A549 (cell line): ENCODE measurements at regions of chr14 and their contacts with region 1.

Region 1: DNA sequence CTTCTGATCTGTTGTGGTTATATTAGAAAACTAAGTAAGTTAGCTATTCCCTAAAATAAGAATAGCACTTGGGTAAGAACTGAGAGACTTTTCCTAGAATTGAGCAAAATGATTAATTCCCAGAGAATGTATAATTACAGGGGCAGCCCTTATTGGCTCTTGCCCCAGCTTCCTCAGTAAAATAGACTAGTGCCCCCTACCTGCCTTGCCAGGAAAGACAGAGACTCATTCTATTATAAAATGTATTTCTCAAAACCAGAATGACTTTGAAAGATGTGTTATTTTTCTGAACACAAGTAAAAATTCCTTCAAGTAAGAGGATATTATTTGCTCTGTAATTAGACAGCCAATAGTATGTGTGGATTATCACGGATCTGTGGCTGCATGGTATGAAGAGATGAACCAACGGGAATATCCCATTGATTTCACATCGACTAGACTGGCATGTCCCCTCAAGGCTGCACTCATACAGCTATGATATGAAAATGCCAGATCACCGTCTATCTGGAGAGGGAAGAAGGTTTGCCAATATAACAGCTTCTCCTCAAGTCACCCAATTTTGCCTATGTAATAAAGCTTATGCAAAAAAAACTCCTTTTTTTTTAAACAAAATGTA is 7.4 kb upstream of the GLRX5 start:
- DNase-seq: peak in 1 of 2 experiments; percentile 44
- ATAC-seq: peak; percentile 45 to 78; a peak in 3 of 6 replicates
- H3K4me3 ChIP-seq: no peak overlapping the region
- H3K27ac ChIP-seq: no peak overlapping the region
- H3K4me1 ChIP-seq: peaks cover 53% of the 10 kb centered on the region
- CTCF ChIP-seq: peak; percentile 77
- EP300 ChIP-seq: no peak
- POLR2A ChIP-seq: no peak
- RAD21 ChIP-seq: peak; percentile 55 to 60; a peak in 3 of 5 replicates

Region 2: DNA sequence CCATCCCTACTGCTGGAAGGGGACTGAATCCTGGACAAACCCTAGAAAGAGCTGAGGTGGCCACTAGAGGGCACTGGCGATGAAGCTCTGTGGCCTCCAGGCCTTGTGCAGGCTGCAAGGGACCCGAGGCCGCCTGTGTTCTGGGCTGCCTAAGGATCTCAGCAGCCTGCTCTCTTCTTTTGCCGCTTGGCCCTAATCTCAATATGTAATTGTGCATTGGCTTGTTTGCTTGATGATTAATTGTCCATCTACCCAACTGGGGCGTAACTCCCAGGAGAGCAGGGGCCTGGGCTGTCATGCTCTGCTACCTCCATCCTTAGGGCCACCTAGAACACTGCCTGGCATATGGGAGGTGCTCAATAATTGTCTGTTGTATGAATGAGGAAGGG is 84.9 kb before region 1 on chr14:
- CTCF ChIA-PET with region 1: interaction called, 133 read pairs
- POLR2A ChIA-PET with region 1: interaction called, 3 read pairs
- DNase-seq: peak; percentile 69 to 91
- ATAC-seq: peak; percentile 90 to 98
- H3K4me3 ChIP-seq: no peak overlapping the region
- H3K27ac ChIP-seq: no peak overlapping the region
- H3K4me1 ChIP-seq: no peaks in the 10 kb centered on the region
- CTCF ChIP-seq: peak; percentile 83
- EP300 ChIP-seq: no peak
- POLR2A ChIP-seq: no peak
- RAD21 ChIP-seq: peak; percentile 82 to 90

Region 3: GRCh38 chr14:95452176-95452892 is 75.2 kb before region 1 on chr14:
- CTCF ChIA-PET with region 1: interaction called, 133 read pairs
- POLR2A ChIA-PET with region 1: no interaction called
- DNase-seq: peak; percentile 24 to 60
- ATAC-seq: peak; percentile 72 to 90
- H3K4me3 ChIP-seq: no peak overlapping the region
- H3K27ac ChIP-seq: no peak overlapping the region
- H3K4me1 ChIP-seq: no peaks in the 10 kb centered on the region
- CTCF ChIP-seq: peak; percentile 32; the same call in 1 of the 3 replicates
- EP300 ChIP-seq: no peak
- POLR2A ChIP-seq: no peak
- RAD21 ChIP-seq: peak in 1 of 2 experiments; percentile 27; a peak in 1 of 5 replicates

Region 4: GRCh38 chr14:95460647-95461478 is 66.6 kb before region 1 on chr14:
- CTCF ChIA-PET with region 1: interaction called, 24 read pairs
- POLR2A ChIA-PET with region 1: no interaction called
- DNase-seq: peak; percentile 39 to 61
- ATAC-seq: peak; percentile 79 to 85
- H3K4me3 ChIP-seq: 0 out of 3 replicates have a peak overlapping the region, but pooled peaks have one; percentile 15
- H3K27ac ChIP-seq: 0 out of 6 replicates have a peak overlapping the region, but pooled peaks of 1 of the 2 experiments have one; percentile 3
- H3K4me1 ChIP-seq: peaks cover 11% of the 10 kb centered on the region; the same call in 2 of the 3 replicates
- CTCF ChIP-seq: no peak
- EP300 ChIP-seq: no peak
- POLR2A ChIP-seq: no peak
- RAD21 ChIP-seq: no peak

Region 5: DNA sequence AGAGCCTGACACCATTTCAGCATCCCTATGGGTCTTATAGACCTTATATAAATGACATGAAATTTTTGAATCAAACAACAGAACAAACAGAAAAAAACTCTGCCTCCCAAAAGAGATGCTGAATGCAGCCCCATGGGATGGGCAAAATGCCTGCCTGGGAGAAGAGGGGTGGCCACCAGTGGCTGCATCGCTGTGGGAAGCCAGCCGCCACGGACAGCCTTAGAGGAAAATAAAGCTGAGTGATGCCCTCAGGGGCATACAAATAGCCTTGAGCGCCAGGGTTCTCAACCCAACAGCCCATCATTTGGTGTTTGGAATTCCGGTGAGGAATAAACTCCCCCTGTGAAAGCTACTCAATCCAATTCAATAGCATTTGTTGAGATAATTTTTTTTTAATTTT is 34.0 kb before region 1 on chr14:
- CTCF ChIA-PET with region 1: interaction called, 10 read pairs
- POLR2A ChIA-PET with region 1: no interaction called
- DNase-seq: no peak
- ATAC-seq: no peak
- H3K4me3 ChIP-seq: no peak overlapping the region
- H3K27ac ChIP-seq: no peak overlapping the region
- H3K4me1 ChIP-seq: peaks cover 6% of the 10 kb centered on the region; the same call in 1 of the 3 replicates
- CTCF ChIP-seq: no peak
- EP300 ChIP-seq: no peak
- POLR2A ChIP-seq: no peak
- RAD21 ChIP-seq: no peak